CD14-positive monocyte (primary cell): ENCODE measurements at regions of chr2 and their contacts with region 1.

Region 1: GRCh38 chr2:177207101-177207500 is 5.5 kb upstream of the HNRNPA3 start:
- DNase-seq: no peak
- H3K4me3 ChIP-seq: no peak overlapping the region
- H3K4me3 Mint-ChIP-seq: no peak overlapping the region
- H3K27ac ChIP-seq: no peak overlapping the region
- H3K27ac Mint-ChIP-seq: peak overlapping the region in 1 of 7 donors; percentile 53
- H3K4me1 ChIP-seq: peaks cover 9 to 14% of the 10 kb centered on the region in 2 donors
- H3K4me1 Mint-ChIP-seq: peaks cover 13% of the 10 kb centered on the region
- H3K27me3 ChIP-seq: no peaks in the 10 kb centered on the region
- H3K27me3 Mint-ChIP-seq: no peaks in the 10 kb centered on the region
- CTCF ChIP-seq: no peak

Region 2: DNA sequence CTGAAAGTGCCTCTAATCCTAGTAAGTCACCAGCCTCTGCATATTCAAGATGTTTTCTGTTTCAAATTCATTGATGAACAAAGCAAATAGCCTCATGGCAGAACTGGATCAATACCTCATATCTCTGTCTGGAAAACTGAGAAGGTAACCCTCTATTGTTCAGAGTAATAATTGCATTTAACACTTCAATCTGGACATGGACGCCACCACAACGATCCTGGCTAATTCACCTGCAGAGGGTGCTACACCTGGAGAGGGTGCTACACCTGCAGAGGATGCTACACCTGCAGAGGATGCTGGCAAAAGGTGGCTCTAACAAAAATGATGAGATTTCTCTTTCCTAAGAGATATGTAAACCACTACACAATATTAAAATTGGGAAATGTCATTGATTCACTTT is 177.6 kb before region 1 on chr2:
- intact Hi-C with region 1: no loop called
- DNase-seq: no peak
- H3K4me3 ChIP-seq: no peak overlapping the region
- H3K4me3 Mint-ChIP-seq: no peak overlapping the region
- H3K27ac ChIP-seq: no peak overlapping the region
- H3K27ac Mint-ChIP-seq: no peak overlapping the region
- H3K4me1 ChIP-seq: no peaks in the 10 kb centered on the region
- H3K4me1 Mint-ChIP-seq: no peaks in the 10 kb centered on the region
- H3K27me3 ChIP-seq: no peaks in the 10 kb centered on the region
- H3K27me3 Mint-ChIP-seq: peaks cover 0 to 2% (median 0%) of the 10 kb centered on the region in 3 donors
- CTCF ChIP-seq: no peak

Region 3: GRCh38 chr2:177169810-177170514 is 37.1 kb before region 1 on chr2:
- intact Hi-C with region 1: loop called (anchors 5 kb)
- DNase-seq: peak in 1 of 3 donors; percentile 2
- H3K4me3 ChIP-seq: no peak overlapping the region
- H3K4me3 Mint-ChIP-seq: no peak overlapping the region
- H3K27ac ChIP-seq: no peak overlapping the region
- H3K27ac Mint-ChIP-seq: peak overlapping the region in 5 of 7 donors; percentile 14 to 75 (median 52)
- H3K4me1 ChIP-seq: peaks cover 24 to 32% of the 10 kb centered on the region in 2 donors
- H3K4me1 Mint-ChIP-seq: peaks cover 34% of the 10 kb centered on the region
- H3K27me3 ChIP-seq: no peaks in the 10 kb centered on the region
- H3K27me3 Mint-ChIP-seq: no peaks in the 10 kb centered on the region
- CTCF ChIP-seq: no peak

Region 4: GRCh38 chr2:177187631-177188312 is 19.3 kb before region 1 on chr2:
- intact Hi-C with region 1: no loop called
- DNase-seq: no peak
- H3K4me3 ChIP-seq: no peak overlapping the region
- H3K4me3 Mint-ChIP-seq: no peak overlapping the region
- H3K27ac ChIP-seq: no peak overlapping the region
- H3K27ac Mint-ChIP-seq: no peak overlapping the region
- H3K4me1 ChIP-seq: no peaks in the 10 kb centered on the region
- H3K4me1 Mint-ChIP-seq: peaks cover 2% of the 10 kb centered on the region
- H3K27me3 ChIP-seq: no peaks in the 10 kb centered on the region
- H3K27me3 Mint-ChIP-seq: peaks cover 0 to 7% (median 3%) of the 10 kb centered on the region in 3 donors
- CTCF ChIP-seq: no peak